Right ventricle myocardium inferior (tissue), 1 donor: ENCODE measurements at regions of chr16 and their contacts with region 1.

Region 1: GRCh38 chr16:425082-425718 is at the start of gene RAB11FIP3:
- DNase-seq: peak; percentile 92
- ATAC-seq: peak; percentile 91
- total RNA-seq, gene RAB11FIP3: 23.3 TPM

Region 2: GRCh38 chr16:401468-402348 is 23.5 kb before region 1 on chr16 and contains the start of gene DECR2:
- intact Hi-C with region 1: loop called (anchors 2 kb)
- DNase-seq: peak; percentile 99
- ATAC-seq: peak; percentile 92
- total RNA-seq, gene DECR2: 10.6 TPM

Region 3: DNA sequence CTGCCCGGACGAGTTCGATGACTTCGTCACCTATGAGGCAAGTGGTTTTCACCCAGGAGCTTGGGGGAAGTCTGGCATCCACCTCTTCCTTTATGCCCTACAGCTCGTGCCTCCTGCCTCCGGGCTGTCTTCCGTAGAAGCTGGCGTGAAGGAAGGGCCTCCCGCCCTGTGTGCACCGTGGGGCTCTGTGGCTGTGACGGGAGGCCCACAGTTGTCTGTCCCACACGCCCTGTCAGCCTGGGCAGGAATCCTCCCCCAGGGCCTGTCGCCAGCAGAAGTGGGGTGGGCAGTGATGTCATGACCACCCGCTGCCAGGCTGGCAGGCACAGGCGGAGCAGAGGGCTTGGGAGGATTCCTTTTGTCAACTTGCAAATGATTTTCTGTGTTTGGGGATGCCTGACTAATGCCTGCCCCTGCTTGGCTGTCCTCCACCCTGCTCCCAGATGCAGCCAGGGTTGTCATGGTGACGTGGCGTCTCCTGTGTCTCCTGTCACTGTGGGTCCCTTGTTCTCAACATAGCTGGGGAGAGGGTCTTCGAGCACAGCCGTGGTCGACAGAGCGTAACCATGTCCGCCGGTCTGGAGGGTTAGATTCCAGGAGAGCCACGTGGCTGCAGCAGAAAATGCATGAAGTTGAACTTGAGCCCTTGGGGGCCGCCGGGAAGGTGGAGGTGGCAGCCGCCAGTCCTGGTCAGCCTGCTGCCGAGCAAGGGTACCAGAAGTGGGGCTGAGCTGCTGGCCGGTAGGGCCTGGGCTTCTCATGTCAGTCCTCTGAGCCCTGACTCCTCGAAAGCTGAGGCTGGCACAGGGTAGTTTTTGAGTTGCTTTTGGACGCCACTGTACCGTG is 46.4 kb after region 1 on chr16:
- intact Hi-C with region 1: loop called (anchors 5 kb)
- DNase-seq: no peak
- ATAC-seq: peak; percentile 24

Region 4: GRCh38 chr16:527006-527753 is 102.0 kb after region 1 on chr16 and contains the start of gene CAPN15:
- intact Hi-C with region 1: loop called (anchors 2 kb)
- DNase-seq: peak; percentile 95
- ATAC-seq: peak; percentile 91
- total RNA-seq, gene CAPN15: 16.8 TPM